ENCODE measurements at regions of chr15 and their contacts with region 1.

Region 1: DNA sequence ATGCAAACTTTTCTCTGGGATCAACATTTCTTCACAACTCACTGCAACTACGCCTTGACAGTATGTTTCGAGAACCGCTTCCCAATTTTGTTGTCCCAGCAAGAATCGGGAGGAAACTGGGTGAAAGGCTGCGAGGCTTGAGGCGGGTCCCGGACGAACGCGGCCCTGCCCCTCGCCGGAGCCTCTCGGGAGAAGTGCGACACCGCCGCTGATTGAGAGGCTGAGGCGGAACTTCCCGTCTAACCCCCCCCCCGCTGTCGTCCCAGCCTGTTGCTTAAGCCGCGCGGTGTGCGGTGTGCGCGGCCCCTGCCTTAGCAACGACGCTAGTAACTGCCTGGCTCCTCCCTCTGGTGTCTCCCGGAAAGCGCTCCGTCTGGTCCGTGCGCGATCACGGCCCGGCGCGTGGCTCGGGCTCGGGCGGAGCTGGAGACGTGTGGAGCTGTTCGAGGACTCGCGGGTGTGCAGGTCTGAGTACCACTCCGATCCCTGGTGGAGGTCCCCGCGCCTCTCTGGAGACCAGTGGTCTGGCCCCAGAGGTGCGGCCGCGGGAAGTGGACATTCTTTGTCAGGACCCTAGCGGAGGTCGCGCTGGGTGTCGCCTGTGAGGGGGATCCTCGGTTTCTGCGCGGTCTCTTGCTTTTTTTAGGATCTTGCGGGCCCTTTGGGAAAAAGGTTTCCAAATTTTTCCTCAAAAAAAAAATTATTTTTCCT is at the starts of genes DTWD1 and FAM227B:
- DNase-seq: peak; percentile 97 to 98
- ATAC-seq: peak; percentile 98 to 100 (median 100)
- H3K4me3 ChIP-seq: peak within 1 kb of the TSS; percentile 83
- H3K27ac ChIP-seq: peak within 1 kb of the TSS; percentile 94
- H3K4me1 ChIP-seq: peaks cover 28% of the 10 kb centered on the region
- H3K27me3 ChIP-seq: no peaks in the 10 kb centered on the region
- CTCF ChIP-seq: no peak
- total RNA-seq, gene DTWD1: 11.9 to 17.9 (median 13.5) TPM
- total RNA-seq, gene FAM227B: 6.5 to 11.9 (median 7.0) TPM

Region 2: GRCh38 chr15:49046220-49047102 is 574.4 kb before region 1 on chr15 and contains the start of gene SECISBP2L:
- intact Hi-C with region 1: loop called in 1 of 2 experiments (anchors 5 kb)
- DNase-seq: peak; percentile 92 to 95
- ATAC-seq: peak; percentile 98 to 99 (median 99)
- H3K4me3 ChIP-seq: peak within 1 kb of the TSS; percentile 95
- H3K27ac ChIP-seq: peak within 1 kb of the TSS; percentile 79
- H3K4me1 ChIP-seq: peaks cover 17% of the 10 kb centered on the region
- H3K27me3 ChIP-seq: no peaks in the 10 kb centered on the region
- CTCF ChIP-seq: no peak
- total RNA-seq, gene SECISBP2L: 22.0 to 31.9 (median 29.4) TPM

Region 3: GRCh38 chr15:49155110-49155833 is 465.5 kb before region 1 on chr15 and contains the start of gene COPS2:
- intact Hi-C with region 1: loop called (anchors 5 to 10 kb)
- DNase-seq: peak; percentile 91 to 95
- ATAC-seq: peak; percentile 98 to 99 (median 98)
- H3K4me3 ChIP-seq: peak within 1 kb of the TSS; percentile 91
- H3K27ac ChIP-seq: peak within 1 kb of the TSS; percentile 91
- H3K4me1 ChIP-seq: peaks cover 31% of the 10 kb centered on the region
- H3K27me3 ChIP-seq: no peaks in the 10 kb centered on the region
- CTCF ChIP-seq: no peak
- total RNA-seq, gene COPS2: 109 to 160 (median 137) TPM

Region 4: GRCh38 chr15:49649987-49650386 is 29.2 kb after region 1 on chr15:
- intact Hi-C with region 1: no loop called
- DNase-seq: no peak
- ATAC-seq: no peak
- H3K4me3 ChIP-seq: no peak overlapping the region
- H3K27ac ChIP-seq: no peak overlapping the region
- H3K4me1 ChIP-seq: no peaks in the 10 kb centered on the region
- H3K27me3 ChIP-seq: no peaks in the 10 kb centered on the region
- CTCF ChIP-seq: no peak

Region 5: GRCh38 chr15:49741712-49742111 is 120.9 kb after region 1 on chr15:
- intact Hi-C with region 1: no loop called
- DNase-seq: no peak
- ATAC-seq: no peak
- H3K4me3 ChIP-seq: no peak overlapping the region
- H3K27ac ChIP-seq: no peak overlapping the region
- H3K4me1 ChIP-seq: no peaks in the 10 kb centered on the region
- H3K27me3 ChIP-seq: no peaks in the 10 kb centered on the region
- CTCF ChIP-seq: no peak

Measured in psoas muscle (tissue), 8 donors.